Activated B cell treated with CpG ODN at 0.5 μM for 24 hours (primary cell): ENCODE measurements at regions of chr2 and their contacts with region 1.

Region 1: GRCh38 chr2:32450851-32451250 is 94.0 kb downstream of the BIRC6 start:
- DNase-seq: no peak
- ATAC-seq: no peak
- H3K4me3 Mint-ChIP-seq: no peak overlapping the region
- H3K27ac Mint-ChIP-seq: no peak overlapping the region
- H3K4me1 Mint-ChIP-seq: peaks cover 3% of the 10 kb centered on the region
- H3K27me3 Mint-ChIP-seq: no peaks in the 10 kb centered on the region
- CTCF ChIP-seq: no peak

Region 2: GRCh38 chr2:32330136-32330535 is 120.7 kb before region 1 on chr2:
- CTCF ChIA-PET with region 1: no interaction called
- POLR2A ChIA-PET with region 1: no interaction called
- intact Hi-C with region 1: no loop called
- DNase-seq: no peak
- ATAC-seq: no peak
- H3K4me3 Mint-ChIP-seq: no peak overlapping the region
- H3K27ac Mint-ChIP-seq: no peak overlapping the region
- H3K4me1 Mint-ChIP-seq: no peaks in the 10 kb centered on the region
- H3K27me3 Mint-ChIP-seq: no peaks in the 10 kb centered on the region
- CTCF ChIP-seq: no peak

Region 3: GRCh38 chr2:32436150-32436549 is 14.7 kb before region 1 on chr2:
- CTCF ChIA-PET with region 1: no interaction called
- POLR2A ChIA-PET with region 1: no interaction called
- intact Hi-C with region 1: loop called (anchors 2 kb)
- DNase-seq: no peak
- ATAC-seq: no peak
- H3K4me3 Mint-ChIP-seq: no peak overlapping the region
- H3K27ac Mint-ChIP-seq: no peak overlapping the region
- H3K4me1 Mint-ChIP-seq: no peaks in the 10 kb centered on the region
- H3K27me3 Mint-ChIP-seq: no peaks in the 10 kb centered on the region
- CTCF ChIP-seq: no peak

Region 4: DNA sequence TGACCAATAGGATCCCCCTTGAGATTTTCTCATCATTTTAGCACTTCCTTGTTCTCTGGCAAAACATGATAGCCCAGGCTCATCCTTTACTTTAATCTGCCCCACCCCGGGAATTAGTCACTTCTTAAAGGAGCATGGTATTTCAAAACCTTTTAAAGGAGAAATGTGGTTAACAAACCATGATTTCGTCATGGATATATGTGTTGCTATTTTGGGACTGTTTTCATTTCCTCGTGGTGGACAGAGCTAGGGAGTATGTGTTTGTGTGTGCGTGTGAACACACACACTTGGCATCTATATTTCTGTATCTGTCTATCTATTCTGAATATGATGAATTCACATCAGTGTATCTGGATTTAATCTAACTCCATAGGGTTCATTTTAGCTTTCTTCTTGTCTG is 34.1 kb after region 1 on chr2:
- CTCF ChIA-PET with region 1: no interaction called
- POLR2A ChIA-PET with region 1: no interaction called
- intact Hi-C with region 1: no loop called
- DNase-seq: no peak
- ATAC-seq: no peak
- H3K4me3 Mint-ChIP-seq: no peak overlapping the region
- H3K27ac Mint-ChIP-seq: peak overlapping the region; percentile 31
- H3K4me1 Mint-ChIP-seq: peaks cover 2% of the 10 kb centered on the region
- H3K27me3 Mint-ChIP-seq: no peaks in the 10 kb centered on the region
- CTCF ChIP-seq: no peak